ENCODE measurements at regions of chr2 and their contacts with region 1.

Region 1: GRCh38 chr2:143259368-143259958 is 130.2 kb downstream of the ARHGAP15 start:
- DNase-seq: peak; percentile 42 to 89 (median 72)
- ATAC-seq: peak; percentile 32
- H3K4me3 ChIP-seq: peak overlapping the region in 1 of 2 experiments; percentile 33
- H3K4me3 Mint-ChIP-seq: peak overlapping the region; percentile 74
- H3K27ac ChIP-seq: peak overlapping the region in 1 of 2 experiments; percentile 74
- H3K27ac Mint-ChIP-seq: peak overlapping the region; percentile 83
- H3K4me1 ChIP-seq: peaks cover 68% of the 10 kb centered on the region
- H3K4me1 Mint-ChIP-seq: peaks cover 77% of the 10 kb centered on the region
- H3K27me3 ChIP-seq: no peaks in the 10 kb centered on the region
- H3K27me3 Mint-ChIP-seq: no peaks in the 10 kb centered on the region
- CTCF ChIP-seq: peak; percentile 96

Region 2: GRCh38 chr2:141835103-141835502 is 1424.4 kb before region 1 on chr2:
- CTCF ChIA-PET with region 1: no interaction called
- POLR2A ChIA-PET with region 1: no interaction called
- intact Hi-C with region 1: no loop called
- DNase-seq: no peak
- ATAC-seq: no peak
- H3K4me3 ChIP-seq: no peak overlapping the region
- H3K4me3 Mint-ChIP-seq: no peak overlapping the region
- H3K27ac ChIP-seq: no peak overlapping the region
- H3K27ac Mint-ChIP-seq: no peak overlapping the region
- H3K4me1 ChIP-seq: no peaks in the 10 kb centered on the region
- H3K4me1 Mint-ChIP-seq: no peaks in the 10 kb centered on the region
- H3K27me3 ChIP-seq: no peaks in the 10 kb centered on the region
- H3K27me3 Mint-ChIP-seq: no peaks in the 10 kb centered on the region
- CTCF ChIP-seq: no peak

Region 3: GRCh38 chr2:142756430-142756829 is 503.0 kb before region 1 on chr2:
- CTCF ChIA-PET with region 1: no interaction called
- POLR2A ChIA-PET with region 1: no interaction called
- intact Hi-C with region 1: no loop called
- DNase-seq: no peak
- ATAC-seq: no peak
- H3K4me3 ChIP-seq: no peak overlapping the region
- H3K4me3 Mint-ChIP-seq: no peak overlapping the region
- H3K27ac ChIP-seq: no peak overlapping the region
- H3K27ac Mint-ChIP-seq: no peak overlapping the region
- H3K4me1 ChIP-seq: no peaks in the 10 kb centered on the region
- H3K4me1 Mint-ChIP-seq: no peaks in the 10 kb centered on the region
- H3K27me3 ChIP-seq: no peaks in the 10 kb centered on the region
- H3K27me3 Mint-ChIP-seq: no peaks in the 10 kb centered on the region
- CTCF ChIP-seq: no peak

Region 4: GRCh38 chr2:143034292-143035074 is 225.0 kb before region 1 on chr2:
- CTCF ChIA-PET with region 1: interaction called, 14 read pairs
- POLR2A ChIA-PET with region 1: no interaction called
- intact Hi-C with region 1: loop called (anchors 1 to 2 kb)
- DNase-seq: peak in 8 of 9 experiments; percentile 32 to 88 (median 56)
- ATAC-seq: peak; percentile 100
- H3K4me3 ChIP-seq: no peak overlapping the region
- H3K4me3 Mint-ChIP-seq: no peak overlapping the region
- H3K27ac ChIP-seq: no peak overlapping the region
- H3K27ac Mint-ChIP-seq: no peak overlapping the region
- H3K4me1 ChIP-seq: no peaks in the 10 kb centered on the region
- H3K4me1 Mint-ChIP-seq: no peaks in the 10 kb centered on the region
- H3K27me3 ChIP-seq: no peaks in the 10 kb centered on the region
- H3K27me3 Mint-ChIP-seq: peaks cover 6% of the 10 kb centered on the region
- CTCF ChIP-seq: peak; percentile 99

Region 5: GRCh38 chr2:143128681-143129580 is 130.5 kb before region 1 on chr2 and contains the start of gene ARHGAP15:
- CTCF ChIA-PET with region 1: interaction called, 33 read pairs
- POLR2A ChIA-PET with region 1: interaction called, 22 read pairs
- intact Hi-C with region 1: loop called in 1 of 2 experiments (anchors 2 kb)
- DNase-seq: peak; percentile 34 to 93 (median 70)
- ATAC-seq: peak; percentile 84
- H3K4me3 ChIP-seq: peak within 1 kb of the TSS; percentile 48 to 62
- H3K4me3 Mint-ChIP-seq: peak within 1 kb of the TSS; percentile 82
- H3K27ac ChIP-seq: peak within 1 kb of the TSS; percentile 81 to 93
- H3K27ac Mint-ChIP-seq: peak within 1 kb of the TSS; percentile 99
- H3K4me1 ChIP-seq: peaks cover 62% of the 10 kb centered on the region
- H3K4me1 Mint-ChIP-seq: peaks cover 54% of the 10 kb centered on the region
- H3K27me3 ChIP-seq: no peaks in the 10 kb centered on the region
- H3K27me3 Mint-ChIP-seq: no peaks in the 10 kb centered on the region
- CTCF ChIP-seq: no peak
- total RNA-seq, gene ARHGAP15: 115 to 119 TPM

Region 6: DNA sequence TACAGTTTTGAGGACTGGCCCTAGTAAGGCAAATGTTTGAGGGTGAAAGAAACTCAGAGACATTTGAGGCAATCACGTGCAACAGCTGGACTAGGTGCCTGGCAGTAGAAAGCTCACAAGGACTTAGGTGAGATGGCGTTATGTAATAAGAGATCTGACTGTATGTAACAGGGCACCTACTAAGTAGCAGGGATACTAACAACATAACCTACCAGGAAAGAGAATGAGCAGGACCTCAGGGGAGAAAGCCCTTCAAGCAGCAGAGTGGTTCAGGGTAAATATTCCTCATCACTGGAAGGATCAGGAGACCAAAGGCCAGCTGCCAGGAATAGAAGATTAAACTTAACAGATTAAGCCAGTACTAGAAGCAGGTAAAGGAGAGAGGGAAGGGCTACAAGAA is 76.8 kb before region 1 on chr2:
- CTCF ChIA-PET with region 1: interaction called, 13 read pairs
- POLR2A ChIA-PET with region 1: interaction called, 4 read pairs
- intact Hi-C with region 1: no loop called
- DNase-seq: no peak
- ATAC-seq: no peak
- H3K4me3 ChIP-seq: no peak overlapping the region
- H3K4me3 Mint-ChIP-seq: no peak overlapping the region
- H3K27ac ChIP-seq: no peak overlapping the region
- H3K27ac Mint-ChIP-seq: peak overlapping the region; percentile 28
- H3K4me1 ChIP-seq: peaks cover 37% of the 10 kb centered on the region
- H3K4me1 Mint-ChIP-seq: peaks cover 76% of the 10 kb centered on the region
- H3K27me3 ChIP-seq: no peaks in the 10 kb centered on the region
- H3K27me3 Mint-ChIP-seq: no peaks in the 10 kb centered on the region
- CTCF ChIP-seq: no peak

Region 7: GRCh38 chr2:143223556-143223955 is 35.9 kb before region 1 on chr2:
- CTCF ChIA-PET with region 1: interaction called, 34 read pairs
- POLR2A ChIA-PET with region 1: interaction called, 3 read pairs
- intact Hi-C with region 1: loop called (anchors 1 to 2 kb)
- DNase-seq: no peak
- ATAC-seq: no peak
- H3K4me3 ChIP-seq: no peak overlapping the region
- H3K4me3 Mint-ChIP-seq: no peak overlapping the region
- H3K27ac ChIP-seq: no peak overlapping the region
- H3K27ac Mint-ChIP-seq: peak overlapping the region; percentile 42
- H3K4me1 ChIP-seq: peaks cover 23% of the 10 kb centered on the region
- H3K4me1 Mint-ChIP-seq: peaks cover 60% of the 10 kb centered on the region
- H3K27me3 ChIP-seq: no peaks in the 10 kb centered on the region
- H3K27me3 Mint-ChIP-seq: no peaks in the 10 kb centered on the region
- CTCF ChIP-seq: no peak

Region 8: DNA sequence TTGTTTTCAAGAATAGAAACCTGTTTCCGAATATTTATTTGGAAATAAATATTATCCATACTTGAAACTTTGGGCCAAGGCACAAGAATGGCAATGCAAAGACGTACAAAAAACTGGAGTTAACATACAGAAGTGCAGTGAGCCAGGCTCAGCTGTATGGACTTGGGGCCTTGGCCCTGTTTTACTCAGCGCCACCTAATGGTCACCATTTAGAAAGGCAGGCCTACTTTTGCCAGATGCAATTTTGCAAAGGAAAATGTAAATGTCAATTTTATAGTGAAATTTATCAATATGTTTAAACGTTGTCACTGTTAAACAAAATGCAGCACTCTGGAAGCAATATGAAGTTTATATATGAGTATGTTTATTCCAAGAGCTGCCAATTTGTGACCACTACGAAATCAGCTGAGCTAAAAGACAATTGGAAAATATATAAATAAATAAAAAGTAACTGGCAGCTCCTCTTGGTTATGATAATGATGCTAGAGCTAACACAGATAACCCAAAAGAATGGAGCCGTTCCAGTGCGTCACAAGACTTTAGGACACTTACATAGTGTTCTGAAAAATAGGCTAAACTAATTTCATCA is 24.7 kb after region 1 on chr2:
- CTCF ChIA-PET with region 1: interaction called, 21 read pairs
- POLR2A ChIA-PET with region 1: interaction called, 3 read pairs
- intact Hi-C with region 1: no loop called
- DNase-seq: peak in 4 of 9 experiments; percentile 12 to 73 (median 46)
- ATAC-seq: peak; percentile 88
- H3K4me3 ChIP-seq: no peak overlapping the region
- H3K4me3 Mint-ChIP-seq: no peak overlapping the region
- H3K27ac ChIP-seq: no peak overlapping the region
- H3K27ac Mint-ChIP-seq: no peak overlapping the region
- H3K4me1 ChIP-seq: no peaks in the 10 kb centered on the region
- H3K4me1 Mint-ChIP-seq: peaks cover 55% of the 10 kb centered on the region
- H3K27me3 ChIP-seq: no peaks in the 10 kb centered on the region
- H3K27me3 Mint-ChIP-seq: no peaks in the 10 kb centered on the region
- CTCF ChIP-seq: peak; percentile 77

Region 9: GRCh38 chr2:143296089-143296488 is 36.6 kb after region 1 on chr2:
- CTCF ChIA-PET with region 1: no interaction called
- POLR2A ChIA-PET with region 1: no interaction called
- intact Hi-C with region 1: no loop called
- DNase-seq: no peak
- ATAC-seq: no peak
- H3K4me3 ChIP-seq: no peak overlapping the region
- H3K4me3 Mint-ChIP-seq: no peak overlapping the region
- H3K27ac ChIP-seq: no peak overlapping the region
- H3K27ac Mint-ChIP-seq: no peak overlapping the region
- H3K4me1 ChIP-seq: no peaks in the 10 kb centered on the region
- H3K4me1 Mint-ChIP-seq: peaks cover 54% of the 10 kb centered on the region
- H3K27me3 ChIP-seq: no peaks in the 10 kb centered on the region
- H3K27me3 Mint-ChIP-seq: no peaks in the 10 kb centered on the region
- CTCF ChIP-seq: no peak